MCF 10A (cell line): ENCODE measurements at regions of chr17 and their contacts with region 1.

Region 1: GRCh38 chr17:16380640-16381495 is at the start of gene UBB:
- DNase-seq: peak; percentile 96
- H3K4me3 Mint-ChIP-seq: peak within 1 kb of the TSS; percentile 89
- H3K27ac Mint-ChIP-seq: peak within 1 kb of the TSS; percentile 100
- H3K4me1 Mint-ChIP-seq: peaks cover 32% of the 10 kb centered on the region
- H3K27me3 Mint-ChIP-seq: no peaks in the 10 kb centered on the region
- CTCF ChIP-seq: no peak
- total RNA-seq, gene UBB: 626 and 729 TPM in 2 replicates

Region 2: GRCh38 chr17:16285957-16286640 is 94.8 kb before region 1 on chr17:
- CTCF ChIA-PET with region 1: no interaction called
- POLR2A ChIA-PET with region 1: interaction called, 12 read pairs
- intact Hi-C with region 1: no loop called
- DNase-seq: peak; percentile 96
- H3K4me3 Mint-ChIP-seq: peak overlapping the region; percentile 54
- H3K27ac Mint-ChIP-seq: peak overlapping the region; percentile 88
- H3K4me1 Mint-ChIP-seq: peaks cover 35% of the 10 kb centered on the region
- H3K27me3 Mint-ChIP-seq: no peaks in the 10 kb centered on the region
- CTCF ChIP-seq: no peak

Region 3: GRCh38 chr17:16363749-16364536 is 16.9 kb before region 1 on chr17:
- CTCF ChIA-PET with region 1: interaction called, 64 read pairs
- POLR2A ChIA-PET with region 1: interaction called, 45 read pairs
- intact Hi-C with region 1: no loop called
- DNase-seq: peak; percentile 78
- H3K4me3 Mint-ChIP-seq: no peak overlapping the region
- H3K27ac Mint-ChIP-seq: no peak overlapping the region
- H3K4me1 Mint-ChIP-seq: no peaks in the 10 kb centered on the region
- H3K27me3 Mint-ChIP-seq: no peaks in the 10 kb centered on the region
- CTCF ChIP-seq: peak; percentile 74

Region 4: GRCh38 chr17:16521070-16521727 is 140.3 kb after region 1 on chr17:
- CTCF ChIA-PET with region 1: interaction called, 18 read pairs
- POLR2A ChIA-PET with region 1: interaction called, 8 read pairs
- intact Hi-C with region 1: loop called (anchors 1 kb)
- DNase-seq: peak; percentile 89
- H3K4me3 Mint-ChIP-seq: no peak overlapping the region
- H3K27ac Mint-ChIP-seq: no peak overlapping the region
- H3K4me1 Mint-ChIP-seq: peaks cover 14% of the 10 kb centered on the region
- H3K27me3 Mint-ChIP-seq: peaks cover 20% of the 10 kb centered on the region
- CTCF ChIP-seq: peak; percentile 81